Right lobe of liver (tissue), 6 donors: ENCODE measurements at regions of chr12 and their contacts with region 1.

Region 1: DNA sequence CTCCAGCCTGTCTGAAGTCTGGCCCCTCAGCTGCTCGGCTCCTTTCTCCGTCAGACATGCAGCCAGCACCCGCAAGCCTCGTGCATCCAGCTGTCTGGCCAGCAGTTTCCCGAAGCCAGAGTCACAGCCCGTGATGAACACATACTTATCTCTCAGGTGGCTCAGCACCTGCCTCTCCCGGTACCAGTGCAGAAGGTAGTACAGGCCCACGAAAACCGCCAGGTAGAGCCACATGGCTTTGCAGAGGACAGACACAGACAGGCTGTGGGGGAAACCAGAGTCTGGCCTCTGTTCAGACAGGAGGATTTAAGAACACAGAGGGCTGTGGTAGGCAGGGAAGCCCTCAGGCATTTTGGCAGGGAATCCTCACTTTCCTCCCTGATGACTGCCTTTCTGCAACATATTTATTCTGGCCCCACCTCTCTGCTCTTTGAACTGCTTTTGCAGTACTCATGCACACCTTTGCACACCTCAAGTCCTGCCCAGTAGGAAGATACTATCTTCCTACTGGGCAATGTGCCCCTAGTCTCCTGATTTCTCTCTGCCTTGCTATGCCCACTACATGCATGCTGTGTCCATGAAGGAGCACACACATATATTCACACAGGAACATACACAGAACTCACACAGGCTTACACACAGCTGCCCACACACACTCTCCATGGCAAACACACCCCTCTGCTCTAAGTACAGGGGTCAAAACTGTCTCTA is at the start of gene RDH16:
- DNase-seq: peak in 2 of 3 donors; percentile 63 to 78
- ATAC-seq: peak; percentile 67 to 84 (median 78)
- H3K4me3 ChIP-seq: peak within 1 kb of the TSS; percentile 43 to 77 (median 66)
- H3K27ac ChIP-seq: peak within 1 kb of the TSS; percentile 73 to 89 (median 79)
- H3K4me1 ChIP-seq: peaks cover 0 to 50% (median 6%) of the 10 kb centered on the region in 4 donors
- H3K27me3 ChIP-seq: no peaks in the 10 kb centered on the region
- CTCF ChIP-seq: no peak
- POLR2A ChIP-seq: peak; percentile 49
- total RNA-seq, gene RDH16: 84.6 to 481 (median 147) TPM

Region 2: DNA sequence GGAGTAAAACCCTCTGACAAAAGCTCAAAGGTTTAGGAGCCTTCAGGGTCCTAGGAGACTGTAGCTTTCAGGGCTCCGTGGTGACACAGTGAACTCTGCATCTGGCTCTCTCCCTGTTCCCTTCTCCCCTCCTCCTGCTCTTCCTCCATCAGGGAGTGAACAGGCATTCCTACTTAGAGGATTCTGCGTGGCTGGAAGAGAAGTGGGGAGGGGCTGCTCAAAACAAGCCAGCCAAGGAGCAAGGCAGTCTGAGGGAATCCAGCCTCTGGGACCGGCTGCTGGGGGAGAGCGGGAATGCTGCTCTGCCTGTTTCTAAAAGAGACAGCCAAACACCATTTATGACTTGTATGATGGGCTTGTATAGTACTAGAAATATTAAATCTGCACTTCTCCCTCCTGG is 386.3 kb before region 1 on chr12:
- intact Hi-C with region 1: no loop called
- DNase-seq: no peak
- ATAC-seq: no peak
- H3K4me3 ChIP-seq: no peak overlapping the region
- H3K27ac ChIP-seq: no peak overlapping the region
- H3K4me1 ChIP-seq: peaks cover 0 to 5% (median 0%) of the 10 kb centered on the region in 4 donors
- H3K27me3 ChIP-seq: no peaks in the 10 kb centered on the region
- CTCF ChIP-seq: no peak
- POLR2A ChIP-seq: no peak

Region 3: DNA sequence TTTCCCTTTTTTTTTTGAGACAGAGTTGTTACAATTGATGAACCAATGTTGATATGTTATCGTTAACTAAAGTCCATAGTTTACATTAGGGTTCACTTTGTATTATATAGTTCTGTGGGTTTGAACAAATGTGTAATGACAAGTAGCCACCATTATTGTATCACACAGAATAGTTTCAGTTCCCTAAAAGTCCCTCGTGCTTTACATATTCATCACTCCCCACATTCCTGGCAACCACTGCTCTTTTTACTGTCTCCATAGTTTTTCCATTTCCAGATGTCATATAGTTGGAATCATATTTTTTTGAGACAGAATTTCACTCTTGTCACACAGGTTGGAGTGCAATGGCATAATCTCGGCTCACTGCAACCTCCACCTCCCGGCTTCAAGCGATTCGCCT is 181.7 kb before region 1 on chr12:
- intact Hi-C with region 1: no loop called
- DNase-seq: no peak
- ATAC-seq: no peak
- H3K4me3 ChIP-seq: no peak overlapping the region
- H3K27ac ChIP-seq: no peak overlapping the region
- H3K4me1 ChIP-seq: peaks cover 0 to 61% (median 15%) of the 10 kb centered on the region in 4 donors
- H3K27me3 ChIP-seq: no peaks in the 10 kb centered on the region
- CTCF ChIP-seq: no peak
- POLR2A ChIP-seq: no peak

Region 4: GRCh38 chr12:56785874-56786273 is 171.5 kb before region 1 on chr12:
- intact Hi-C with region 1: no loop called
- DNase-seq: no peak
- ATAC-seq: no peak
- H3K4me3 ChIP-seq: no peak overlapping the region
- H3K27ac ChIP-seq: peak overlapping the region in 1 of 3 donors; percentile 14
- H3K4me1 ChIP-seq: peaks cover 0 to 36% (median 0%) of the 10 kb centered on the region in 4 donors
- H3K27me3 ChIP-seq: no peaks in the 10 kb centered on the region
- CTCF ChIP-seq: no peak
- POLR2A ChIP-seq: no peak

Region 5: GRCh38 chr12:56900583-56900982 is 56.8 kb before region 1 on chr12:
- intact Hi-C with region 1: loop called in 1 of 2 experiments (anchors 10 kb)
- DNase-seq: no peak
- ATAC-seq: no peak
- H3K4me3 ChIP-seq: no peak overlapping the region
- H3K27ac ChIP-seq: no peak overlapping the region
- H3K4me1 ChIP-seq: peaks cover 0 to 37% (median 17%) of the 10 kb centered on the region in 4 donors
- H3K27me3 ChIP-seq: no peaks in the 10 kb centered on the region
- CTCF ChIP-seq: no peak
- POLR2A ChIP-seq: no peak